MCF 10A (cell line): ENCODE measurements at regions of chr15 and their contacts with region 1.

Region 1: DNA sequence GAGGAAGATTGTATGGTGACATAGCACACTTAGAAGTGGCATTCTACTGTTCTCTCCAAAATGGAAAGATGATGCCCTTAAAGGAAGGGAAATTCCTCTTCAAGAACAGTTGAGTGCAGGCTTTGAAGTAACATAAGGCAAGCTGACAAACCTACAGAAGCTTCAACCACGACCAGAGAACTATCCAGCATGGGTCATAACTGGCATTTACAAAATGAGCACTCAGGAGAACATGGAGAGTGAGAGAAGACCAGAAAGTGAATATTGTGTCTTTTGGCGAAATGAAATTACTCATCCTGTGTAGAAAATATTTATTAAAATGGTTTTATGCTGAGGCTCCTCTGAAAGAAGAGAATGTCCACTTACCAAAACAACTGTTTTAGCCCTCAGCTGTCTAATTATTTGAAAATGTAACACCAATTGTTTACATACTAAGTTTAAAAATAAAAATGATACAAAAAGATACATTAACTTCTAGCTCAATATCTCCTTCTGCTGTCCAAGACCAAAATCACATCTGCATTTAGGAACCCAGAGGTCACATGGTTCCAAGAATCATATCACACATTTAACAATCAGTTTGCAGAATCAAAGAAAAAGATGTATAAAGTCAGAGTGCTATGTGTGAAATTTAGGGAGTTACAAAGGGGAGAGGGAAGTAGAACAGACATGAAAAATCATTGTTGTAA is 216.9 kb downstream of the ATP8B4 start:
- DNase-seq: peak; percentile 43
- H3K4me3 Mint-ChIP-seq: no peak overlapping the region
- H3K27ac Mint-ChIP-seq: peak overlapping the region; percentile 14
- H3K4me1 Mint-ChIP-seq: peaks cover 10% of the 10 kb centered on the region
- H3K27me3 Mint-ChIP-seq: no peaks in the 10 kb centered on the region
- CTCF ChIP-seq: peak; percentile 52

Region 2: DNA sequence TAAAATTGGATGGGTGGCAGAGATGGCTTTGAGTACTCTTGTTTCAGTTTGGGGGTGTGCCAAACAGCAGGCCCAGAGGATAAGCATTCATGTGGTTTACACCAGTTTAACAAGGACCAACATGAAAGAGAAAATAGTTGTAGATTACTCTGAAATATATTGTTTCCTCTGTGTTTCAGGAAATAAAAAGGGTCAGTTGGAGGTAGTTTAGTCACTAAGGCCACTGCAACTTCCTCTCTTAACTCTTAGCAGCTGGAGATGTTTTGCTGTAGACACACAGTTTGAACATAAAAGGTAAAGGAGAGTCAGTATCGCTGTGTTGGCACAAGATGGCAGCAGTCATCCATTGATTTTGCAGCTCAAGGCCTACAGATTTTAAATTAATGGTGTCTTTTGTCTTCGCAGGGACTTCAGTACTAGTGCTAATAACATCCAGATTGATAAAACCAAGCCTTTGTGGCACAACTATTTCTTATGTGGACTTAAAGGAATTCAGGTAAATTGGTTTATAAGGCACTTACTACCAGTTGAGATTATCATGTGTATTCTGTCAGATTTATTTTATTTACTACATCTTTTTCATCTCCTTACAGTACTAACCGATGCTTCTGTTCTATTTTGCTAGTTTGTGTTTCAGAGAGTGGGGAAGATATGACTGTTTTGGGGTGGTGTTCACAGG is 666.6 kb before region 1 on chr15:
- CTCF ChIA-PET with region 1: interaction called, 8 read pairs
- POLR2A ChIA-PET with region 1: interaction called, 4 read pairs
- intact Hi-C with region 1: loop called (anchors 5 kb)
- DNase-seq: peak; percentile 69
- H3K4me3 Mint-ChIP-seq: no peak overlapping the region
- H3K27ac Mint-ChIP-seq: peak overlapping the region; percentile 35
- H3K4me1 Mint-ChIP-seq: peaks cover 9% of the 10 kb centered on the region
- H3K27me3 Mint-ChIP-seq: no peaks in the 10 kb centered on the region
- CTCF ChIP-seq: peak; percentile 74

Region 3: GRCh38 chr15:49370782-49371181 is 531.4 kb before region 1 on chr15:
- CTCF ChIA-PET with region 1: no interaction called
- POLR2A ChIA-PET with region 1: no interaction called
- intact Hi-C with region 1: loop called (anchors 10 kb)
- DNase-seq: peak; percentile 30
- H3K4me3 Mint-ChIP-seq: no peak overlapping the region
- H3K27ac Mint-ChIP-seq: no peak overlapping the region
- H3K4me1 Mint-ChIP-seq: no peaks in the 10 kb centered on the region
- H3K27me3 Mint-ChIP-seq: no peaks in the 10 kb centered on the region
- CTCF ChIP-seq: peak; percentile 29

Region 4: DNA sequence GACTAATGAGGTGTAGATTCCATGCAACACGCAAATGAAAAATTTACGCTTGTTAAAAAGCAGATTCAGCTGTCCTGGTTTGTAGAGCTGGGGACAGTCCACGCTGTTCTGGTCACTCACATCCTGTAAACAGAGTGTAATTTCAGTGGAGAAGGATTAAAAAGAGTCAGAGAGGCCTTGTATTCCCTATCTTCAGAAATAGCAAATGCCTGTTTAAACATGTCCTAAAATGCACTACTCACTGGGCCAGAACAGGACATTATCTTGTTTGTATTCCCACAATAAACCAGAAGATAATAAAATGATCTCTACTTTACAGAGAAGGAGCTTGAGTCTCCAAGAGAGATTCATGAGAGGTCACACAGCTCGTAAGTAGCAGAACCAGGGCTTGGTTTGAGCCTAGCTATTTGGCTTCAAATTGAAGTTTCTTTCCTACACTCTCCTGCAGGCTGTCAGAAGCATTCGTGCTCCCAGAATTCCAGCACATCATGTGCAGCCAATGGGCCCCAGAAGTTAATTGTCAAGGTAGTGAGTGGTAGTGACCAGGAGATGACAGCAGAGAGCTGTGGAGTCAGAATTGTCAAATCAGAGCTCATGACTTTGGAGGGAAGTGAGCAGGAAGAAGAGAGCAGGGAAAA is 25.6 kb before region 1 on chr15:
- CTCF ChIA-PET with region 1: interaction called, 10 read pairs
- POLR2A ChIA-PET with region 1: interaction called, 3 read pairs
- intact Hi-C with region 1: no loop called
- DNase-seq: no peak
- H3K4me3 Mint-ChIP-seq: no peak overlapping the region
- H3K27ac Mint-ChIP-seq: no peak overlapping the region
- H3K4me1 Mint-ChIP-seq: no peaks in the 10 kb centered on the region
- H3K27me3 Mint-ChIP-seq: no peaks in the 10 kb centered on the region
- CTCF ChIP-seq: peak; percentile 17

Region 5: GRCh38 chr15:50287324-50288116 is 385.4 kb after region 1 on chr15:
- CTCF ChIA-PET with region 1: no interaction called
- POLR2A ChIA-PET with region 1: no interaction called
- intact Hi-C with region 1: no loop called
- DNase-seq: no peak
- H3K4me3 Mint-ChIP-seq: no peak overlapping the region
- H3K27ac Mint-ChIP-seq: no peak overlapping the region
- H3K4me1 Mint-ChIP-seq: no peaks in the 10 kb centered on the region
- H3K27me3 Mint-ChIP-seq: no peaks in the 10 kb centered on the region
- CTCF ChIP-seq: no peak